Aorta (tissue), 5 donors: ENCODE measurements at regions of chr17 and their contacts with region 1.

Region 1: DNA sequence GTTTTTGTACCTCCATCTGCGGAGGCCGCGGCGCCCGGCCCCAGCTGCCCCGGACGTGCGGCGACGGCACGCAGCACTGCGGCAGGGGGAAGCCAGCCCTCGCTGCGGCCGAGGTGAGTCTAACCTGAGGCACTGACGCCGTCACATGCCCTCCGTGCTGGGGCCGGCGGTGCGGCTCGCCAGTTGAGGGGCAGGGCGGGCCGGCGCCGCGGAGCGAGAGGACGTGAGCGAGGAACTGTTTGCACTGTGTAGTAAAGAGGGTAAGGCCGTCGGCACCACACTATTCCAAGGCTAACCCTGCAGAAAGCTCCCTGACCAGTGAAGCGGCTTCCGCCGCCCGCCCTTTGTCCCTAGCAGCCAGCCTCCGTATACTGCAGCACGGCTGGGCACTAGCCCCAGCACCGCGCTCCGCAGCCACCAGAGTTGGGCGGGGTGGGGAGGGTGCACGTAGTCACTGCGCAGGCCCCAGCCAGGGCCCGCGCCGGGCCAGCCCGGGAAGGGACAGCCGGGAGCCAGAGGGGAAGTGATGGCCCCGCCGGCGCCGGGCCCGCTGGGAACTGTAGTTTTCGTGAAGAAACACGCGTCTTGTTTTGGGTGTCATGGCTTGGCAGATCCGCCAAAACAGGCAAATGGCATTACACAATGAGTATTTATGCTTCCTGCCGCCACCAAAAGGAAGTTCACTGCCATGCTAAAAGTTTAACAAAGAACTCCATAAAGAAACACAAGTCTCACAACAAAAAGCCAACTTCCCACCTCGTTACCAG is 580 bp upstream of the KANSL1 start:
- DNase-seq: peak; percentile 98 to 100
- ATAC-seq: peak; percentile 96
- H3K4me3 ChIP-seq: peak overlapping the region; percentile 77 to 86
- H3K27ac ChIP-seq: peak overlapping the region in 1 of 2 donors; percentile 87
- H3K4me1 ChIP-seq: peaks cover 0 to 5% of the 10 kb centered on the region in 2 donors
- H3K27me3 ChIP-seq: no peaks in the 10 kb centered on the region

Region 2: GRCh38 chr17:46157443-46158062 is 36.3 kb before region 1 on chr17:
- intact Hi-C with region 1: loop called in 1 of 2 experiments (anchors 5 kb)
- DNase-seq: no peak
- ATAC-seq: peak; percentile 60
- H3K4me3 ChIP-seq: peak overlapping the region in 1 of 2 donors; percentile 24
- H3K27ac ChIP-seq: no peak overlapping the region
- H3K4me1 ChIP-seq: peaks cover 3 to 6% of the 10 kb centered on the region in 2 donors
- H3K27me3 ChIP-seq: no peaks in the 10 kb centered on the region

Region 3: DNA sequence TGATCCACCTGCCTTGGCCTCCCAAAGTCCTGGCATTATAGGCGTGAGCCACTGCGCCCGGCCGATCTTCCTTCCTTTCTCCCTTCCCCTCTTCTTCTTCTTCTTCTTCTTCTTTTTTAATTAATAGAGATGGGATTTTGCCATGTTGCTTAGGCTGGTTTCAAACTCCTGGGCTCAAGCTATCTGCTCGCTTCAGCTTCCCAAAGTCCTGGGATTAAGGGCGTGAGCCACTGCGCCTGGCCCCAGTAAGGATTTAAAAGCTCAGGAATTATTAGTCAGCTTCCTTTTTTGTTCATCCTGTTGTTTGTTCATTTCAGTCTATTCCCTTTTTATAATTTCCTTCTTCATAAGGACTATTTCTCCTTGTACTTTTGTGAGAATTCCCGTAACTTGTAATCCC is 68.5 kb after region 1 on chr17:
- intact Hi-C with region 1: no loop called
- DNase-seq: no peak
- ATAC-seq: no peak
- H3K4me3 ChIP-seq: no peak overlapping the region
- H3K27ac ChIP-seq: no peak overlapping the region
- H3K4me1 ChIP-seq: no peaks in the 10 kb centered on the region
- H3K27me3 ChIP-seq: no peaks in the 10 kb centered on the region